Naive thymus-derived CD8-positive, alpha-beta T cell (primary cell): ENCODE measurements at regions of chr11 and their contacts with region 1.

Region 1: DNA sequence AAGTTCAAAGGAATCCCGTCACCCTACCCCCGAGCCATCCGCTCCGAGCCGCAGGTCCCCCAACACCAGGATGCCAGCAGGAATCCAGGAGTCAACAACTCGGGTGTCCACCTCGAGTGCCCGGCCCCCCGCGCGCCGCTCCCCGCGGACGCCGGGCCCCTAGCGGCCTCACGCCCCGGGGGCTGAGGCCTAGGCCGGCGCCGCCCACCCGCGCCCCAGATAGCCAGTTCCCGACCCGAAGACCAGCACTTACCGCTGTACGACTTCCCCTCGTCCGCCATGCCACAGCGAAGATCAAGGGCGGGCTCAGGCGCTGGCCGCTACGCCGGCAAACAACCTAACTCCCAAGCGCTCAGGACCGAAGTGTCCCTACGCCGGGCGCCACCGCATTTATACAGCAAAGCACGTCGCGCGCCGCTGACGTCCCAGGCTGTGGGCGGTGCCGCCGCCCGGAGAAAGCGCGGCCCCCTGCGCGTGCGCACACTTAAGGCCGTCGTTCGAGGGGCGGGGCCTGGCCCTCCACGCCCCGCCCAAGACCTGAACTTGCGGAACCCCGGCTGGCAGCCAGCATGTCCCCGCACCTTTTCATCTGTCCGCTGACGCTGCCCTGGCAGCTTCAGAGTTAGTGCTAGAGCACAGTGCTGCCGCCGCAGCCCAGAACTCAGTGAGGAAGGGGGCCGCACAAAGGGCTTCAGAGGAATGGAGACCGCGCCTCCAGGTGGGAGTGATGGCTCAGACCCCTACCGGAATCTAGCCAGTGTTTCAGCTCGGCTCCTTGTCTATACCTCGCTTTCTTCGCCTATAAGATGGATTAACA is at the start of gene NXF1:
- DNase-seq: peak; percentile 90 to 98 (median 97)
- ATAC-seq: peak; percentile 85 to 86
- H3K4me3 Mint-ChIP-seq: peak within 1 kb of the TSS; percentile 93 to 100 (median 99)
- H3K27ac Mint-ChIP-seq: peak within 1 kb of the TSS; percentile 94 to 100 (median 98)
- H3K4me1 Mint-ChIP-seq: peaks cover 11 to 40% (median 29%) of the 10 kb centered on the region in 4 donors
- H3K27me3 Mint-ChIP-seq: no peaks in the 10 kb centered on the region
- polyA plus RNA-seq, gene NXF1: 38.4 to 82.9 (median 62.8) TPM

Region 2: GRCh38 chr11:62580959-62581715 is 224.1 kb before region 1 on chr11:
- POLR2A ChIA-PET with region 1: no interaction called
- DNase-seq: no peak
- ATAC-seq: no peak
- H3K4me3 Mint-ChIP-seq: no peak overlapping the region
- H3K27ac Mint-ChIP-seq: peak overlapping the region in 5 of 10 donors; percentile 4 to 61 (median 51)
- H3K4me1 Mint-ChIP-seq: peaks cover 0 to 16% (median 5%) of the 10 kb centered on the region in 4 donors
- H3K27me3 Mint-ChIP-seq: no peaks in the 10 kb centered on the region

Region 3: DNA sequence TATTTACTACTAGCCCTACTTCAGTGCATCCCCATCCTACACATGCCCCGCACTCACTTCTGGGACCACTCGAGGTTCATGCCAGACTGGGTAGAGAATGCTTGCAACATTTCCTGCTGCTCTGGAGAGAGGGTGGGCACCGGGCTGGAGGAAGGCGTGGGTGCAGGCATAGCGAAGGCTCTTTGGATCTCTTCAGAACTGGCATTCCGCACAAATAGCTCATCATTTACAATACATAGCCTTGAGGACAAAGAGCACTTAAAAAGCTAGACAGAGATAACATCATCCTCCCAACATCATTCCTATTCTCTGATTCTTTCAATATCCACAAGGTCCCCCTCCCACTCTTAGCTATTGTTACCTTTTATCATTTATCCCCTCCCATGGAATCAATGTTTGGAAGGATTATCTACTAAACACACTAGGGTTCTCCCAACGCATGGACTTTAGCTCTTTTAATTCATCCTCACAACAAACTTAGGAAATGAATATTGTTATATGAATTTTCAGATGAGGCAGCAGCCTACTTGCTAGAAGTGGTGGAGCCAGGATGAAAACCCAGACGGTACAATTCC is 11.0 kb before region 1 on chr11:
- POLR2A ChIA-PET with region 1: interaction called, 48 read pairs
- DNase-seq: no peak
- ATAC-seq: no peak
- H3K4me3 Mint-ChIP-seq: peak overlapping the region in 2 of 10 donors; percentile 9 to 36
- H3K27ac Mint-ChIP-seq: peak overlapping the region in 7 of 10 donors; percentile 3 to 75 (median 52)
- H3K4me1 Mint-ChIP-seq: peaks cover 15 to 37% (median 35%) of the 10 kb centered on the region in 4 donors
- H3K27me3 Mint-ChIP-seq: no peaks in the 10 kb centered on the region

Region 4: GRCh38 chr11:62816557-62816956 is 11.3 kb after region 1 on chr11:
- POLR2A ChIA-PET with region 1: interaction called, 18 read pairs
- DNase-seq: no peak
- ATAC-seq: no peak
- H3K4me3 Mint-ChIP-seq: no peak overlapping the region
- H3K27ac Mint-ChIP-seq: peak overlapping the region in 3 of 10 donors; percentile 48 to 84 (median 60)
- H3K4me1 Mint-ChIP-seq: peaks cover 0 to 4% (median 0%) of the 10 kb centered on the region in 4 donors
- H3K27me3 Mint-ChIP-seq: no peaks in the 10 kb centered on the region

Region 5: DNA sequence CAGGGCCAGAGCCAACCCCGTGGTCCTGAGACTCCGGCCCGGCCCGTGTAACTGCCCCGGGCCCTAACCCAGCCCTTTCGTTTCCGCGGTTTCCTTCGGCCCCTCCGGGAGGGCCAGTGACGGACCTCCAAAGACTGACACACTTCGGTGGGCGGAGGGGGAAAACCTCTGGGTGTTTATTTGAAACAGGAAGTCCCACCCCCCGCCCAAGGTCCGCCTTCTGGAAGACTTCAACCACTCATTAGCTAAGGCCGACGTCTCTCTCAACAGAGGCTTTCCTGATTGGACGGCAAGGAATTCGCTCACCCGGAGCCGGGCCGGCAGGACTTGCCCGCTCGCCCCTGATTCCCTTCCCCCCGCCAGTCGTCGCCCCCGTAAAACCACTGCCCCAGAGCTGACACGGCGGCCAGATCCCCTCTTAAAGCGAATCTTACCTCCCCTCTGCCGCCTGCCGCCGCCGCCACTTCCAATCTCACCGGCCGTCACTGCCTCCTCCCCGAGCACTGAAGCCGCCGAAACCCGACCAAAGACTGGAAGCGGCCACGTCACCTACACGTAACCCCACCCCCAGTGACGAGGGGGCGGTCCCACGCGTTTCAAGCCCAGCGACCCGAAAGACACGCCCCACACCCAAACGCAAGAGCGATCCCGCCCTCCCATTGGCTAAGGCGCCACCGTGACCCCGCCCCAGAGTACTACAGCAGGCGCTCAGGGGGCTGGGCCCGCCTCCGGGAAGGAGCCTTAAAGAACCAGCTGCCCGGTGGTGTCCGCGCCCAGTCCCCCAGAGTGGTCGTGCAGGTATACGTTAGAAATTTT is 26.4 kb after region 1 on chr11 and contains the start of gene STX5:
- POLR2A ChIA-PET with region 1: interaction called, 18 read pairs
- DNase-seq: peak; percentile 99 to 100 (median 100)
- ATAC-seq: peak; percentile 89 to 90
- H3K4me3 Mint-ChIP-seq: peak within 1 kb of the TSS; percentile 93 to 99 (median 98)
- H3K27ac Mint-ChIP-seq: peak within 1 kb of the TSS; percentile 91 to 100 (median 100)
- H3K4me1 Mint-ChIP-seq: peaks cover 25 to 56% (median 48%) of the 10 kb centered on the region in 4 donors
- H3K27me3 Mint-ChIP-seq: no peaks in the 10 kb centered on the region
- polyA plus RNA-seq, gene STX5: 25.4 to 30.4 (median 26.2) TPM

Region 6: DNA sequence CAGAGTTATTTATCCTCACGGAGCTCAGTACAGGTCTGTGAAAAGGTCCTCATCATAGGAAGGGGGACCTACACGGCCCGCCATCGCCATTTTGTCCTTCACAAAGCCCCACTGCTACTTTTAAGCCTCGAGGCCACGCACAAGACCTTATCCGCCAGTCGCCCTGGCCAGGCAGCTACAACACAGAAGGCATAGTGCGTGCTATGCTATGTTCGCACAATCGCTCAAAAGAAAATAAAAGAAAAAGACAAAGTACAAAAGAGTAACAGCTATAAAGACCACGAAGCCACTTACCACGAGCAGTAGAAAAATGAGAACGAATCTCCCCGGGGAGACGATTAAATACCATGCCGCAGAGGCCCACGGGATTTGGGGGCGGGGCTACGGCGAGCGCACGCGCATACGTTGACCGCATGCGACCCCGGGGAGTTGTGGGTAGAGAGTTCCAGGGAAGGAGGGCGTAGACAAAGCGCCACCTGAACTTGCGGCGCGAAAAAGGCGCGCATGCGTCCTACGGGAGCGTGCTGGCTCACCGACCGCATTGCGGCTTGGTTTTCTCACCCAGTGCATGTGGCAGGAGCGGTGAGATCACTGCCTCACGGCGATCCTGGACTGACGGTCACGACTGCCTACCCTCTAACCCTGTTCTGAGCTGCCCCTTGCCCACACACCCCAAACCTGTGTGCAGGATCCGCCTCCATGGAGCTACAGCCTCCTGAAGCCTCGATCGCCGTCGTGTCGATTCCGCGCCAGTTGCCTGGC is 50.5 kb after region 1 on chr11:
- POLR2A ChIA-PET with region 1: interaction called, 26 read pairs
- DNase-seq: peak; percentile 94 to 99 (median 98)
- ATAC-seq: peak; percentile 87 to 90
- H3K4me3 Mint-ChIP-seq: peak overlapping the region; percentile 95 to 99 (median 98)
- H3K27ac Mint-ChIP-seq: peak overlapping the region; percentile 88 to 99 (median 98)
- H3K4me1 Mint-ChIP-seq: peaks cover 33 to 54% (median 52%) of the 10 kb centered on the region in 4 donors
- H3K27me3 Mint-ChIP-seq: peaks cover 0 to 4% (median 0%) of the 10 kb centered on the region in 5 donors